ENCODE measurements at regions of chr6 and their contacts with region 1.

Region 1: DNA sequence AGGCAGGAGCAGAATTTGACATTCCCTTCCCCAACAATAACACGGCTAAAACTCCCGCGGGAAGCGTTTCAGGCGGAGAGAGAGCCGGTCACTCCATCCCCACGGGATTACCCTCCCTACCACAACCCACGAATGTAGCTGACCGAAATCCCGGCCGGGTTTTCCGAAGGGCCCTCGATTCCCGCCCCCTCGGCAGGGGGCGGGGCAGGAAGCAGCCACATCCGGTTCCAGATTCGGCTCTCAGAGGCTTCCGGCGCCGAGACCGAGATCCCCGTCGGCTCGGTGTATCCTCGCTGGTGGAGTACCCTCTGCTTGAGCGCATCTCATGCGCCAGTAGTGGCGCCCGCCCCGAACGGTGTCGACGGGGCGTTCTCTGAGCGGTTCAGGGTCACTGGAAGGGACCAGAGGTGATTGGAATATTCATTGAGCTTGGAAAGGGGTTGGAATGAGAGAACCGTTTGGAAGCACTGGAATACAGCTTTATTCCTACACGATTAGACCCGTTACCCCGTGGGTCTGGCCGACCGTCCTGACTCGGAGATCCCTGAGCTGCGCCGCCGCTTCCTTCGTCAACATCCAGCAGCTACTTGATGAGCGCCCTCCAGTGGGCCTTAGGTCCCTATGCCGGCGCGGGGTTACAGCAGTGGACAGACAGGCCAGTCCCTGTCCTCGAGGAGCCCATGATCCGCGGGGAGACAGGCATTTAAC is 649 bp upstream of the RGL2 start:
- DNase-seq: peak; percentile 84 to 89
- ATAC-seq: peak; percentile 90 to 93
- H3K4me3 ChIP-seq: peak overlapping the region; percentile 71 to 86 (median 80)
- H3K27ac ChIP-seq: peak overlapping the region; percentile 96 to 99 (median 97)
- H3K4me1 ChIP-seq: peaks cover 11 to 23% of the 10 kb centered on the region in 2 donors
- H3K27me3 ChIP-seq: no peaks in the 10 kb centered on the region
- CTCF ChIP-seq: peak; percentile 55 to 85 (median 80)
- POLR2A ChIP-seq: peak; percentile 78 to 86

Region 2: GRCh38 chr6:33271458-33272274 is 27.7 kb before region 1 on chr6 and contains the starts of genes RPS18 and VPS52:
- in situ Hi-C with region 1: no loop called
- intact Hi-C with region 1: loop called (anchors 1 kb)
- DNase-seq: peak; percentile 95 to 96
- ATAC-seq: peak; percentile 98 to 99
- H3K4me3 ChIP-seq: peak within 1 kb of the TSS; percentile 67 to 95 (median 80)
- H3K27ac ChIP-seq: peak within 1 kb of the TSS; percentile 85 to 96 (median 90)
- H3K4me1 ChIP-seq: peaks cover 46 to 53% of the 10 kb centered on the region in 2 donors
- H3K27me3 ChIP-seq: no peaks in the 10 kb centered on the region
- CTCF ChIP-seq: no peak
- POLR2A ChIP-seq: peak; percentile 92 to 95
- total RNA-seq, gene RPS18: 1,834 to 2,142 (median 2,010) TPM
- total RNA-seq, gene VPS52: 28.7 to 52.8 (median 41.2) TPM

Region 3: GRCh38 chr6:33276864-33277662 is 22.3 kb before region 1 on chr6 and contains the start of gene B3GALT4:
- in situ Hi-C with region 1: no loop called
- intact Hi-C with region 1: loop called (anchors 1 kb)
- DNase-seq: peak in 1 of 2 donors; percentile 61
- ATAC-seq: peak; percentile 39 to 53
- H3K4me3 ChIP-seq: peak within 1 kb of the TSS; percentile 56 to 64 (median 62)
- H3K27ac ChIP-seq: peak within 1 kb of the TSS; percentile 70 to 82 (median 76)
- H3K4me1 ChIP-seq: peaks cover 47 to 68% of the 10 kb centered on the region in 2 donors
- H3K27me3 ChIP-seq: no peaks in the 10 kb centered on the region
- CTCF ChIP-seq: peak; percentile 53 to 69 (median 60)
- POLR2A ChIP-seq: peak in 1 of 2 donors; percentile 24
- total RNA-seq, gene B3GALT4: 1.0 to 2.0 (median 1.7) TPM

Region 4: GRCh38 chr6:33317669-33318425 is 18.5 kb after region 1 on chr6 and contains the start of gene ZBTB22:
- in situ Hi-C with region 1: no loop called
- intact Hi-C with region 1: loop called (anchors 1 kb)
- DNase-seq: peak; percentile 99 to 100
- ATAC-seq: peak; percentile 84 to 90
- H3K4me3 ChIP-seq: peak within 1 kb of the TSS; percentile 56 to 70 (median 64)
- H3K27ac ChIP-seq: peak within 1 kb of the TSS; percentile 82 to 93 (median 90)
- H3K4me1 ChIP-seq: peaks cover 36 to 66% of the 10 kb centered on the region in 2 donors
- H3K27me3 ChIP-seq: no peaks in the 10 kb centered on the region
- CTCF ChIP-seq: peak in 1 of 5 experiments; percentile 24
- POLR2A ChIP-seq: peak in 1 of 2 donors; percentile 56
- total RNA-seq, gene ZBTB22: 9.0 to 19.3 (median 16.3) TPM